HepG2 (cell line): ENCODE measurements at regions of chr16 and their contacts with region 1.

Region 1: GRCh38 chr16:67017810-67018488 is 11.0 kb upstream of the CBFB start:
- DNase-seq: peak; percentile 99
- ATAC-seq: peak; percentile 93
- H3K4me3 ChIP-seq: no peak overlapping the region
- H3K27ac ChIP-seq: no peak overlapping the region
- H3K4me1 ChIP-seq: peaks cover 50% of the 10 kb centered on the region
- H3K27me3 ChIP-seq: peaks cover 9 to 24% of the 10 kb centered on the region in 2 experiments
- CTCF ChIP-seq: peak; percentile 99
- EP300 ChIP-seq: no peak
- POLR2A ChIP-seq: no peak
- RAD21 ChIP-seq: peak; percentile 98

Region 2: GRCh38 chr16:66977341-66978113 is 40.4 kb before region 1 on chr16:
- CTCF ChIA-PET with region 1: interaction called, 17 read pairs
- POLR2A ChIA-PET with region 1: no interaction called
- in situ Hi-C with region 1: loop called (anchors 5 kb)
- intact Hi-C with region 1: loop called (anchors 1 kb)
- DNase-seq: peak; percentile 82
- ATAC-seq: peak; percentile 93
- H3K4me3 ChIP-seq: peak overlapping the region in 1 of 3 experiments; percentile 36; a peak in 1 of 6 replicates
- H3K27ac ChIP-seq: no peak overlapping the region
- H3K4me1 ChIP-seq: peaks cover 66% of the 10 kb centered on the region
- H3K27me3 ChIP-seq: peaks cover 2 to 9% of the 10 kb centered on the region in 2 experiments; a peak in 3 of 5 replicates
- CTCF ChIP-seq: peak; percentile 100
- EP300 ChIP-seq: no peak
- POLR2A ChIP-seq: no peak; a peak in 1 of 4 replicates
- RAD21 ChIP-seq: peak; percentile 100

Region 3: DNA sequence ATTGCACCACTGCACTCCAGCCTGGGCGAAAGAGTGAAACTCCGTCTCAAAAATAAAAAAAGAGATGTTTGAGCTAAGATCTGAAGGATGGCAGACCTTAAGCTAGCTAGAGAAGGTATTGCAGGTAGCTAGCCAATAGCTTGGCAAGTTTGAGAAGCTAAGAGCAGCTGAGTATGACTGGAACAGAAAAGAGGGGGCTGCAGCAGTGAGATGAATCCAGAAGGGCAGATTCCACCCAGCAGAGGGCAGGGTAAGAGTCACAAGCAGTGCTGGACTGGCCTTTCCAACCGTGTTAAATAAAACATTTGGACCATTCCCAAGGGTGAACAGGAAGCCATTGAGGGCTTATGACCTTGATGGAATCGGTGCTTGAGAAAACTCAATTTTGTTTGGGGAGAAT is 86.1 kb after region 1 on chr16:
- CTCF ChIA-PET with region 1: interaction called, 12 read pairs
- POLR2A ChIA-PET with region 1: interaction called, 6 read pairs
- in situ Hi-C with region 1: no loop called
- intact Hi-C with region 1: loop called (anchors 1 kb)
- DNase-seq: peak; percentile 68
- ATAC-seq: peak; percentile 92
- H3K4me3 ChIP-seq: no peak overlapping the region
- H3K27ac ChIP-seq: no peak overlapping the region
- H3K4me1 ChIP-seq: peaks cover 10% of the 10 kb centered on the region
- H3K27me3 ChIP-seq: no peaks in the 10 kb centered on the region
- CTCF ChIP-seq: peak; percentile 85
- EP300 ChIP-seq: no peak
- POLR2A ChIP-seq: no peak
- RAD21 ChIP-seq: peak; percentile 71

Region 4: GRCh38 chr16:67115639-67116038 is 97.7 kb after region 1 on chr16:
- CTCF ChIA-PET with region 1: no interaction called
- POLR2A ChIA-PET with region 1: interaction called, 13 read pairs
- in situ Hi-C with region 1: no loop called
- intact Hi-C with region 1: no loop called
- DNase-seq: no peak
- ATAC-seq: no peak
- H3K4me3 ChIP-seq: no peak overlapping the region; a peak in 1 of 6 replicates
- H3K27ac ChIP-seq: peak overlapping the region; percentile 87
- H3K4me1 ChIP-seq: peaks cover 72% of the 10 kb centered on the region
- H3K27me3 ChIP-seq: no peaks in the 10 kb centered on the region; a peak in 1 of 5 replicates
- CTCF ChIP-seq: no peak
- EP300 ChIP-seq: no peak
- POLR2A ChIP-seq: no peak
- RAD21 ChIP-seq: no peak

Region 5: GRCh38 chr16:67159593-67160406 is 141.9 kb after region 1 on chr16 and contains the starts of genes FBXL8 and TRADD:
- CTCF ChIA-PET with region 1: interaction called, 28 read pairs
- POLR2A ChIA-PET with region 1: interaction called, 10 read pairs
- in situ Hi-C with region 1: loop called (anchors 5 kb)
- intact Hi-C with region 1: loop called (anchors 1 kb)
- DNase-seq: peak; percentile 58
- ATAC-seq: peak; percentile 79
- H3K4me3 ChIP-seq: peak within 1 kb of the TSS; percentile 91 to 94 (median 93)
- H3K27ac ChIP-seq: peak within 1 kb of the TSS; percentile 54
- H3K4me1 ChIP-seq: peaks cover 54% of the 10 kb centered on the region
- H3K27me3 ChIP-seq: peaks cover 4 to 5% of the 10 kb centered on the region in 2 experiments; a peak in 2 of 5 replicates
- CTCF ChIP-seq: peak; percentile 77
- EP300 ChIP-seq: 0 out of 4 replicates have a peak, but pooled peaks of 1 of the 2 experiments have one; percentile 3
- POLR2A ChIP-seq: peak; percentile 44 to 81; a peak in 3 of 4 replicates
- RAD21 ChIP-seq: peak; percentile 42
- total RNA-seq, gene FBXL8: 1.5 and 3.9 TPM in 2 replicates
- total RNA-seq, gene TRADD: 6.2 and 7.8 TPM in 2 replicates

Region 6: DNA sequence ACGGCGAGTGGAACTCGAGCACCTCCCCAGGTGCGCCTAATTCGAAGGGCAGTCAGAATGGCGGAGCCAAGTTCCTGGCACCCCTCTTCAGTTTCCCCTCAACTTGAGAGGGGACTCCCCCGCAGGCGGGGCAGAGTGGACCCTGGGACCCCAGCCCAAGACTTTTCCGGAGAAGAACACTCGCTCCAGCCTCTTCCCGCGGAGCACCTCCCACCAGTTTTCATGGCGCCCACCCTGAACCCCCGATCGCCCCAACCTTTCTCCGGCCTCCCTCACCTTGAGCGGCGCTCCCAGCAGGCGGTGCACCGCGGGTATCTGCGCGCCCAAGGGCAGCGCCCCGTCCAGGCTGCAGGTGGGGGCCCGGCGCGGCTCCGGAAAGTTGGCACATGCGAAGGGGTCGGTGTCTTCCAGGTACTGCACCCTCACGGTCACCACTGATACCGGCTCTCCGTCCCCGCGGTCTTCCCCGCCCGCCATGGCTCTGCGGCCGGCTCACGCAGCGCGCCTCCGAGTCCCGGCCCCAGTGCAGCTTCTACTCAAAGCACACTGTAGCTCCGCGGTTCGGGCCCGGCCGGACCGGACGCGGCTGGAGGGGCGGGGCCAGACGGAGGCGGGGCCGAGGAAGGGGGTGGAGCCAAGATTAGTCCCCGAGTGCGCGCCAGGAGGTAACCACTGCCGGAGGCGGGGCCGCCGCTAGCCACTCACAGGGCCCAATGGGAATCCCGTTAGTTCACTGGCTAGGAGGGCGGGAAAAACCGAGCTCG is 229.2 kb after region 1 on chr16 and contains the start of gene FHOD1:
- CTCF ChIA-PET with region 1: no interaction called
- POLR2A ChIA-PET with region 1: no interaction called
- in situ Hi-C with region 1: no loop called
- intact Hi-C with region 1: no loop called
- DNase-seq: peak; percentile 83
- ATAC-seq: peak; percentile 68
- H3K4me3 ChIP-seq: peak within 1 kb of the TSS; percentile 63 to 85 (median 82)
- H3K27ac ChIP-seq: peak within 1 kb of the TSS; percentile 73
- H3K4me1 ChIP-seq: peaks cover 57% of the 10 kb centered on the region
- H3K27me3 ChIP-seq: peaks cover 0 to 22% of the 10 kb centered on the region in 2 experiments; a peak in 3 of 5 replicates
- CTCF ChIP-seq: no peak
- EP300 ChIP-seq: no peak
- POLR2A ChIP-seq: peak; percentile 14 to 72; a peak in 2 of 4 replicates
- RAD21 ChIP-seq: 0 out of 2 replicates have a peak, but pooled peaks have one; percentile 37
- total RNA-seq, gene FHOD1: 10.9 and 20.8 TPM in 2 replicates